Activated B cell treated with CpG ODN at 0.5 μM for 24 hours (primary cell): ENCODE measurements at regions of chr7 and their contacts with region 1.

Region 1: GRCh38 chr7:6505685-6506574 is 45.3 kb downstream of the GRID2IP start:
- DNase-seq: no peak
- ATAC-seq: no peak
- H3K4me3 Mint-ChIP-seq: peak overlapping the region; percentile 28
- H3K27ac Mint-ChIP-seq: no peak overlapping the region
- H3K4me1 Mint-ChIP-seq: peaks cover 9% of the 10 kb centered on the region
- H3K27me3 Mint-ChIP-seq: no peaks in the 10 kb centered on the region
- CTCF ChIP-seq: no peak

Region 2: DNA sequence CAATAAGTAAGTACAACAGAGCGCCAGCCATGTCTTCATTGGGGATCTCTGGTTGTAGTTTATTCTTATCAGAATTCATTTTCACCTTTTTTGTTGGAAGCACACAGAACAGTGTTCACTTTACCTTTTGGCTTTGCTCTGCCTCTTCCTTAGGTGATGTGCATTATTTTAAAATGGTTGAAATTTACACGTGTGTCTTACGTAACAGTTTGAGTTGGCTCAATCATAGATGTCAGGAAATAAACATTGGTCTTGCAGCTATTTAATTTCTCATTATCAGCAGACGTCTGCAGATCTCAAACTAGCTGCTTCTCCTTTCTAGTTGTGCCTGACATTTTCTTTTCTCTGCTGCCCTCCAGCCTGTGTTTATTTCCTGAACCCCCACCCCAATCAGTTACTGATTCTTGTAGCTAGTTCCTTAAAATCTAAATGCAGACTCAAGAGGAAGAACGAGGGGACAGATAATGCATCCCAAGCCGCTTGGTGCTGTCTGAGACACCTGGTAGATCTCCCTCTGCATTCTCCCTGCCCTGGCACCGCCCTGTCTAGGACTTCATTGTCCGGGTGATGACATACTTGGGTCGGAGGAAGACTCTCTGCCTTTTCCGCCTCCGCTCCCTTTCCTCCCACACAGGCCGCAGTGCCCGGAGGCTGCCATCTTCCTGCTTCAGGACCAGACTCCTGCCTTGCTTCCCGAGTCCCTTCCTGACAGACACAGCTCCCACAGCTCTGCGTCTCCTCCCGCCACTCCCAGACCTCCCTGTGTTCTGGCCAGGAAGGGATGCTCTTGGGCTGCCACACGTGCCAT is 366.5 kb before region 1 on chr7:
- CTCF ChIA-PET with region 1: no interaction called
- POLR2A ChIA-PET with region 1: no interaction called
- intact Hi-C with region 1: no loop called
- DNase-seq: no peak
- ATAC-seq: no peak
- H3K4me3 Mint-ChIP-seq: no peak overlapping the region
- H3K27ac Mint-ChIP-seq: no peak overlapping the region
- H3K4me1 Mint-ChIP-seq: no peaks in the 10 kb centered on the region
- H3K27me3 Mint-ChIP-seq: no peaks in the 10 kb centered on the region
- CTCF ChIP-seq: no peak

Region 3: DNA sequence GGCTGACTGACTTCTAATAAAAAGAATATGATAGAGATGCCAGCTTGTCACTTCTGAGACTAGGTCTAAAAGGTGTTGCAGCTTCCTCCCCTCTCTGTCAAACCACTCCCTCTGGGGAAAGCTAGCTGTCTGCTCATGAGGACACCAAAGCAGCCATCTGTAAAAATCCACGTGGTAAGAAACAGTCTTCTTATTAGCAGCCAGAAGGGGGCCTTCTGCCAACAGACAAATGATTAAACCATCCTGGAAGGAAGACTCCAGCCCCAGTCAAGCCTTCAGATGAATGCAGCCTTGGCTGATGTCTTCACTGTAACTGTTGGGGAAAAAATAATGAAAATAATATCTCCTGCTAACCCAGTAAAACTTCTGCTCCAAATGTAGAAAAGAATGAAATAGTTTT is 16.3 kb before region 1 on chr7:
- CTCF ChIA-PET with region 1: no interaction called
- POLR2A ChIA-PET with region 1: interaction called, 11 read pairs
- intact Hi-C with region 1: no loop called
- DNase-seq: no peak
- ATAC-seq: no peak
- H3K4me3 Mint-ChIP-seq: no peak overlapping the region
- H3K27ac Mint-ChIP-seq: no peak overlapping the region
- H3K4me1 Mint-ChIP-seq: peaks cover 3% of the 10 kb centered on the region
- H3K27me3 Mint-ChIP-seq: no peaks in the 10 kb centered on the region
- CTCF ChIP-seq: no peak

Region 4: GRCh38 chr7:6526997-6527378 is 21.1 kb after region 1 on chr7:
- CTCF ChIA-PET with region 1: no interaction called
- POLR2A ChIA-PET with region 1: no interaction called
- intact Hi-C with region 1: no loop called
- DNase-seq: no peak
- ATAC-seq: no peak
- H3K4me3 Mint-ChIP-seq: peak overlapping the region; percentile 62
- H3K27ac Mint-ChIP-seq: no peak overlapping the region
- H3K4me1 Mint-ChIP-seq: peaks cover 19% of the 10 kb centered on the region
- H3K27me3 Mint-ChIP-seq: peaks cover 13% of the 10 kb centered on the region
- CTCF ChIP-seq: no peak